CD8-positive, alpha-beta T cell (primary cell): ENCODE measurements at regions of chr12 and their contacts with region 1.

Region 1: DNA sequence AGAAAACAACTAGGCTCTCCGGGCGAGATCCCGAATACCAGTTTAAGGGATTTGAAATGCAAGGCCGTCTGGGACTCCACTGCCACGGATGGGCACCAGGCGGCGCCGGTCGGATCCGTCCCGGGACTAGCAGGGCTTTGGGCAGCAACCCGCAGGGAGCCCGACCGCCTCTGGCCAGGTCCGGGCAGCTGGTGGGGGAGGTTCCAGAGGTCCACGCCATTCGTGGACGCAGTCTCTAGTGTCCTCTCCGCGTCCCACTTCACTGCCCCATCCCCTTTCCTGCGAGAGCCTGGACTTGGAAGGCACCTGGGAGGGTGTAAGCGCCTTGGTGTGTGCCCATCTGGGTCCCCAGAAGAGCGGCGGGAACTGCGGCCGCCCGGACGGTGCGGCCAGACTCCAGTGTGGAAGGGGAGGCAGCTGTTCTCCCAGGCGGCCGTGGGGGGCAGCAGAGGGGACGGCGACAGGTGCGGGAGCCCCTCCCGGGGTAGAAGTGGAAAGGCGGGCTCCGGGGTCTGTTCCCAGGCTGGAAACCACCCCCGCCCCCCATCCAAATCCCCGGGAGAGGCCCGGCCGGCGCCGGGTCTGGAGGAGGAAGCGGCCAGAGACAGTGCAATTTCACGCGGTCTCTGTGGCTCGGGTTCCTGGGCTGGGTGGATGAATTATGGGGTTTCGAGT is 838 bp upstream of the ERBB3 start:
- DNase-seq: peak; percentile 10 to 74 (median 52)
- ATAC-seq: peak; percentile 64
- H3K4me3 ChIP-seq: peak overlapping the region; percentile 60 to 72
- H3K4me3 Mint-ChIP-seq: peak overlapping the region; percentile 85
- H3K27ac ChIP-seq: no peak overlapping the region
- H3K27ac Mint-ChIP-seq: no peak overlapping the region
- H3K4me1 ChIP-seq: peaks cover 18% of the 10 kb centered on the region
- H3K4me1 Mint-ChIP-seq: peaks cover 14% of the 10 kb centered on the region
- H3K27me3 ChIP-seq: peaks cover 3 to 12% of the 10 kb centered on the region in 2 experiments
- H3K27me3 Mint-ChIP-seq: peaks cover 2% of the 10 kb centered on the region
- CTCF ChIP-seq: peak; percentile 56

Region 2: GRCh38 chr12:56551070-56551469 is 471.9 kb after region 1 on chr12:
- CTCF ChIA-PET with region 1: no interaction called
- POLR2A ChIA-PET with region 1: no interaction called
- intact Hi-C with region 1: no loop called
- DNase-seq: no peak
- ATAC-seq: no peak
- H3K4me3 ChIP-seq: no peak overlapping the region
- H3K4me3 Mint-ChIP-seq: no peak overlapping the region
- H3K27ac ChIP-seq: no peak overlapping the region
- H3K27ac Mint-ChIP-seq: no peak overlapping the region
- H3K4me1 ChIP-seq: no peaks in the 10 kb centered on the region
- H3K4me1 Mint-ChIP-seq: no peaks in the 10 kb centered on the region
- H3K27me3 ChIP-seq: no peaks in the 10 kb centered on the region
- H3K27me3 Mint-ChIP-seq: no peaks in the 10 kb centered on the region
- CTCF ChIP-seq: no peak

Region 3: DNA sequence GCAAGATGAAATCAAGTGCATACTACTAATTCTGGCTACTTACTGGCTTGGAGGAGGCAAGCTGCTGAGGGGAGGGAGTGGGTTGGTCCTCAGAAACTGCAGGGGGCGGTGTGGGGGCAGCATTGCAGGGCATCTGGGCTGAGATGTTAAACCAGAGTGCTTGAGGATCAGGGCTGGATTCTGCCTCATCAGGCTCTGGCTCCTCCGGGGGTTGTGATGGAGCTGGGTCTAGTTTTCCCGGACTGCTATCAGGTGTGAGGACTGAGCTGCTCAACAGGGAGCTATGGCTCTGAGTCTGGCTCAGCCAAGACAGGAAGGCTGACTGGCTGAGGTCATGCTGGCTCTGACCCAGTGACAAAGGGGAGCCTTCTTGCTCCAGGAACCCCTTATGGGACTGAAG is 522.4 kb after region 1 on chr12:
- CTCF ChIA-PET with region 1: no interaction called
- POLR2A ChIA-PET with region 1: no interaction called
- intact Hi-C with region 1: loop called in 1 of 2 experiments (anchors 2 kb)
- DNase-seq: peak in 6 of 9 experiments; percentile 13 to 55 (median 42)
- ATAC-seq: peak; percentile 71
- H3K4me3 ChIP-seq: no peak overlapping the region
- H3K4me3 Mint-ChIP-seq: no peak overlapping the region
- H3K27ac ChIP-seq: no peak overlapping the region
- H3K27ac Mint-ChIP-seq: no peak overlapping the region
- H3K4me1 ChIP-seq: no peaks in the 10 kb centered on the region
- H3K4me1 Mint-ChIP-seq: no peaks in the 10 kb centered on the region
- H3K27me3 ChIP-seq: no peaks in the 10 kb centered on the region
- H3K27me3 Mint-ChIP-seq: no peaks in the 10 kb centered on the region
- CTCF ChIP-seq: no peak